Endothelial cell of umbilical vein (primary cell): ENCODE measurements at regions of chr11 and their contacts with region 1.

Region 1: GRCh38 chr11:130737866-130738431 is 178.3 kb downstream of the SNX19 start:
- DNase-seq: peak; percentile 88
- H3K4me3 ChIP-seq: no peak overlapping the region
- H3K27ac ChIP-seq: peak overlapping the region; percentile 56
- H3K4me1 ChIP-seq: peaks cover 21% of the 10 kb centered on the region
- H3K27me3 ChIP-seq: no peaks in the 10 kb centered on the region
- CTCF ChIP-seq: no peak
- POLR2A ChIP-seq: no peak

Region 2: GRCh38 chr11:130480711-130481140 is 257.2 kb before region 1 on chr11:
- CTCF ChIA-PET with region 1: no interaction called
- POLR2A ChIA-PET with region 1: no interaction called
- dilution Hi-C with region 1: no loop called
- intact Hi-C with region 1: loop called (anchors 5 kb)
- DNase-seq: peak; percentile 80
- H3K4me3 ChIP-seq: no peak overlapping the region
- H3K27ac ChIP-seq: no peak overlapping the region
- H3K4me1 ChIP-seq: peaks cover 28% of the 10 kb centered on the region
- H3K27me3 ChIP-seq: peaks cover 23 to 38% of the 10 kb centered on the region in 2 experiments
- CTCF ChIP-seq: no peak
- POLR2A ChIP-seq: no peak

Region 3: DNA sequence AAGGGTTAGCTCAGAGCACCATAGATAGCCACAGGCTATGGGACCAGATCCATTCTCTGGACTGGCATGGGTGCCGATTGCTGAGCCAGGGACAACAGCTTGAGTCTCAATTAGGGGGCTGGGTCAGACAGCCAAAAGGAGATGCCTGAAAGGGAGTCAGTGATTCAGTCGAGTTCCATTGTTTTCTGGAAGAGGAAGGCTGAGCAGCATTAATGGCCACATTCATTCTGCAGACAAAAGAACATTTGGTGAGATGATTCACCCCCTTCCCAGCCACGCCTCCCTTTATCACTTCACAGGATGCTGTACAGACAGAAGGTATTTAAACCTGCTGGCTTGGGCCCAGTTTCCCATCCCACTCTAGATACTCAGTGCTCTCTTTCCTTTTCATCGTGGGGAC is 157.6 kb before region 1 on chr11:
- CTCF ChIA-PET with region 1: no interaction called
- POLR2A ChIA-PET with region 1: no interaction called
- dilution Hi-C with region 1: no loop called
- intact Hi-C with region 1: loop called (anchors 5 kb)
- DNase-seq: peak; percentile 61
- H3K4me3 ChIP-seq: no peak overlapping the region
- H3K27ac ChIP-seq: peak overlapping the region; percentile 24
- H3K4me1 ChIP-seq: peaks cover 10% of the 10 kb centered on the region
- H3K27me3 ChIP-seq: no peaks in the 10 kb centered on the region
- CTCF ChIP-seq: no peak
- POLR2A ChIP-seq: no peak

Region 4: DNA sequence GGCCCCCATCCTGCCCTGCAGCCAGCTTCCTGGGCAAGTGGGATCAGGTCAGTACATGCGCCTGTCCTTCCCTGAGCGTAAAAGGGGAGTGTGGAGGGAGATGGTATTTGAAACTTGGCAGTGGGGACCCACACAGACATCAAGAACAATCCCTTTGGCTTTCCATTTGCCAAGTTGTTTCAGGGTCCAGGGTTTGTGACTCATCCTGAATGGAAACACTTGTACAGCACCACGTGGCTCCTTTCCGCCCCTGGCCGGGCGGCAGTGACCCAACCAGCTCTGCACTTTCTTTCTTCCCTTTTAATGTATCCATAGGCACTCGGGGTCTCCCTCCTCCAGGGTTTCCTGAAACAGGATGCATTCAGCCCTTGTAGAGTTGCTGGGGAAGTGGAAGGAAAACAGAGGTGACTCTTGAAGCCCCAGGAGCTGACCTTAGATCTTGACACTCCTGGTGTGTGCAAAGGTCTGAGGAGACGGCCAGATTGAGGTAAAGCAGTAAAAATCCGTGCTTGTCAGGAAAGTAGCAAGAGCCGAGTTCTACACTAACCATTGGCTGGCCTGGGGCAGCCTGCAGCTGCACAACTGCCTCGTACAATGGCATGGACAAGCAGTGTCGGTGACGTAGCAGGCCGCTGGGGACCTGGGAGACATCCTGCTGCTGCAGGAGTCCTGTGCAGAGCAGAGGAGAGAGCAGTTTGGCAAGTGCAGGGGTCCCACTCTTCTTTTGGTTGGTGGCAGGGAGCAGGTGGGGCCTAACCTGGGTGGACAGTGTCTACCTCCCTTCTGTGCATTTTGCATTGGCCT is 11.5 kb before region 1 on chr11:
- CTCF ChIA-PET with region 1: interaction called, 12 read pairs
- POLR2A ChIA-PET with region 1: no interaction called
- dilution Hi-C with region 1: no loop called
- intact Hi-C with region 1: loop called (anchors 1 kb)
- DNase-seq: peak; percentile 85
- H3K4me3 ChIP-seq: no peak overlapping the region
- H3K27ac ChIP-seq: peak overlapping the region; percentile 34
- H3K4me1 ChIP-seq: peaks cover 24% of the 10 kb centered on the region
- H3K27me3 ChIP-seq: no peaks in the 10 kb centered on the region
- CTCF ChIP-seq: no peak
- POLR2A ChIP-seq: no peak

Region 5: DNA sequence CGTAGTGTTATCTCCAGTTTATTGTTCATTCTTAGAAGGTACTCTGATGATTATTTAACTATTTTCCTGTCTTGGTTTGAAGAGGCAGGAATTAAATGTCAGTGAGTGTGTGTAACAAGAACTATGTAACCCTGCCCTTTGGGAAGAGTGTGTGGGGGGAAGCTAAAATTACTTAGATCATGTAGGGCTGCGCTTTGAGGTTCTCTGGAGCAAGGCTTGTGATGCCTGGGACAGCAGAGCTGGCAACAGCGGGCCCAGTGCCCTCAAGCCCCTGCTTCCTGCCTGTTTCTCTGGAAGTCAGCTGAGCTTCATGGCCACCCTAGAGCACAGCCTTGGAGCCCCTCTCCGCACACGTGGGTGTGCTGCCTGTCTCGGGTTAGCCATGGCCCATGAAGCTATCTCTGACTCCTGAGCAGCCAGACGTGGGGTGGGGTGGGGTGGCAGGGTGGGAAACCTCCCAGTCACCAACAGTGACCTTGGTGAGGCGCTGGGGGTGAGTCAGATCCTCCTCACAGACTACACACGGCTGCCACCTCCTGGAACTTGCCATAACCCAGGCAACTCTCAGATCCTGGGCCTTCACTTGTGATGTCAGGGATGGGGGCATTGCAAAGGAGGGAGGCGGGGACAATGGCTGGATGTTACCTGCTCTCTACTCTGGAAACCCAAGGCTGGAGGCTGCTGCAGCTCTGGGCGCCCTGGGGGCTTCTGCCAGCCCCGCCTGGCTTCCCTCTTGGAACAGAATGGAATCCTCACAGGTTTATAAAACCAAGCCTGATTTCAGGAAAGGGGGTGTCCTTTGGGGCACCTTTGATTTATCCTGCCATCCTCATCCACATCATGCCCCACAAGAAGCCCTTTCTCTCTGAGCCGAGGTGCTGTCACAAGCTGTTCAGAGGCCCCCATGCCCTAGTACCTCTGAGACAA is 89.8 kb after region 1 on chr11:
- CTCF ChIA-PET with region 1: no interaction called
- POLR2A ChIA-PET with region 1: no interaction called
- dilution Hi-C with region 1: no loop called
- intact Hi-C with region 1: loop called (anchors 5 kb)
- DNase-seq: peak; percentile 65
- H3K4me3 ChIP-seq: no peak overlapping the region
- H3K27ac ChIP-seq: no peak overlapping the region
- H3K4me1 ChIP-seq: no peaks in the 10 kb centered on the region
- H3K27me3 ChIP-seq: no peaks in the 10 kb centered on the region
- CTCF ChIP-seq: peak; percentile 41 to 69
- POLR2A ChIP-seq: no peak